K562 (cell line): ENCODE measurements at regions of chr9 and their contacts with region 1.

Region 1: GRCh38 chr9:91422758-91423711 is 597 bp downstream of the NFIL3 start:
- DNase-seq: peak in 3 of 4 experiments; percentile 18 to 74 (median 54)
- ATAC-seq: peak; percentile 38
- H3K4me3 ChIP-seq: peak overlapping the region; percentile 77
- H3K27ac ChIP-seq: peak overlapping the region; percentile 70; the same call in 2 of the 3 replicates
- H3K4me1 ChIP-seq: peaks cover 19 to 36% of the 10 kb centered on the region in 2 experiments
- H3K27me3 ChIP-seq: peaks cover 3 to 14% of the 10 kb centered on the region in 2 experiments; a peak in 3 of 5 replicates
- CTCF ChIP-seq: peak in 2 of 3 experiments; percentile 19 to 22; a peak in 1 of 6 replicates
- EP300 ChIP-seq: no peak
- POLR2A ChIP-seq: no peak
- RAD21 ChIP-seq: no peak

Region 2: DNA sequence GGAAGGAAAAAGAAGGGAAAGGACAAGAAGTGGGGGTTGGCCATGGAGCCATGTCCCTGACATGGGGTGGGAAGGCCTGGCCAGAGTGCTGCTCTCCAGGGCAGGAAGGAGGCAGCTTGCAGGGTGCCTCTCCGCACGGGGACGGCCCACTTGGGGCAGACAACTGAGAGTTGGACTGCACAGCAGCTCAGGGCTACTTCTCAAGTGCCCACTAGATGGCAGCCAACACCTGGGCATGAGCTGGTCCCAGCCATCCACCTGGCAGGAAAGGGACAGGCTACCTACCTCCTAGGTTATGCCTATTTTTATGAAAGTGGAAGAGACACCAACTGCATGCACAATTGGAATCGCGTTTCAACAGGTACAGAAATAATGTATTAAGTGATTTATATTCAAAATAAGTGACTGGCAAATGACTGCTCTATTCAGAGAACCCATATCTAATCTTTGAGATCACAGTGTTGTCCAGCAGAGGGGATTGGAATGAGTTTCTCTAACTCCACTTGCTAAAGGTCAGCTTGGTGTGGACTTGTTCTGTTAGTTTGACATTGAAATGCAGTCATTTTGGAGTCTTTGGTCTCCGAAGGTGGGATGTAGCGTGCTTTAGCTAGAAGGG is 508.1 kb before region 1 on chr9:
- CTCF ChIA-PET with region 1: interaction called, 3 read pairs
- POLR2A ChIA-PET with region 1: no interaction called
- in situ Hi-C with region 1: loop called (anchors 25 kb)
- intact Hi-C with region 1: loop called (anchors 5 kb)
- DNase-seq: peak; percentile 72 to 76 (median 75)
- ATAC-seq: peak; percentile 98
- H3K4me3 ChIP-seq: no peak overlapping the region
- H3K27ac ChIP-seq: no peak overlapping the region
- H3K4me1 ChIP-seq: no peaks in the 10 kb centered on the region
- H3K27me3 ChIP-seq: peaks cover 0 to 22% of the 10 kb centered on the region in 2 experiments; a peak in 2 of 5 replicates
- CTCF ChIP-seq: peak; percentile 78 to 84 (median 80)
- EP300 ChIP-seq: no peak
- POLR2A ChIP-seq: no peak
- RAD21 ChIP-seq: peak; percentile 78 to 88

Region 3: DNA sequence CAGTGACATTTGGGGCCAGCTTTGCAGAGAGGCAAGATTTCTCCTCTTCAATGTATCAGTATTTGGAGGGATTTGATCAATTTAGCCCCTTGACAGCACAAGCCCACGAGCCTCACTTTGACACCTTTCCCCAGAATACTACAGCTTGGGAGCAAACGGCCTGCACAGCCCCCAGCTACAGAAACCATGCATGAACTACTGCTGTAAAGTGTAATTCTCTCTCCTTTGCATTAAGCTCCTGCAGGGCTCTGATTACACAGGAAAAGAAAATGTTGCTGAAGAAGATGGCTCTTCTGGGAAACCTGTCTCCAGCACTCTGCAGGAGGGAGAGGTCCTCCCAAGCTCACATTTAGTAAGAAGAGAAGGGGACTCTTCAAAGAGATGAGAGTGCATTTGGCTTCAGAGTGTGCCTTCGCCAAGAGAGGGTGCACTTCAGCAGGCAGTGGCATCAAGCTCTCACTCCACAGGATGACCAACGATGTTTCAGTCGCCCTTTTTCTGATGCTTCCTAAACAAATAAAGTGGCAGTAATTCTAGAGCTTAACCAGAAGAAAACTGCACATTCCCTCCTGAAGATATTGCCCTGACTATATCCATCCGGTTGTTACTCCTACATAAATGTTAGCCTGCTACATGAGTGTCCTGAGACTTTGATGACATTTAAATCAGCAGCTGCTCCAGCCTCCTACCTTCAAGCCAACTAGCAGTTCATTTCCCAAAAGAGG is 333.5 kb before region 1 on chr9:
- CTCF ChIA-PET with region 1: no interaction called
- POLR2A ChIA-PET with region 1: no interaction called
- in situ Hi-C with region 1: no loop called
- intact Hi-C with region 1: loop called (anchors 1 kb)
- DNase-seq: peak in 2 of 4 experiments; percentile 13 to 35
- ATAC-seq: peak; percentile 69; the same call in 2 of the 3 replicates
- H3K4me3 ChIP-seq: no peak overlapping the region
- H3K27ac ChIP-seq: no peak overlapping the region
- H3K4me1 ChIP-seq: no peaks in the 10 kb centered on the region; a peak in 1 of 5 replicates
- H3K27me3 ChIP-seq: peaks cover 0 to 8% of the 10 kb centered on the region in 2 experiments; a peak in 1 of 5 replicates
- CTCF ChIP-seq: peak; percentile 38 to 70 (median 40); a peak in 4 of 6 replicates
- EP300 ChIP-seq: no peak
- POLR2A ChIP-seq: no peak
- RAD21 ChIP-seq: peak; percentile 72 to 75

Region 4: DNA sequence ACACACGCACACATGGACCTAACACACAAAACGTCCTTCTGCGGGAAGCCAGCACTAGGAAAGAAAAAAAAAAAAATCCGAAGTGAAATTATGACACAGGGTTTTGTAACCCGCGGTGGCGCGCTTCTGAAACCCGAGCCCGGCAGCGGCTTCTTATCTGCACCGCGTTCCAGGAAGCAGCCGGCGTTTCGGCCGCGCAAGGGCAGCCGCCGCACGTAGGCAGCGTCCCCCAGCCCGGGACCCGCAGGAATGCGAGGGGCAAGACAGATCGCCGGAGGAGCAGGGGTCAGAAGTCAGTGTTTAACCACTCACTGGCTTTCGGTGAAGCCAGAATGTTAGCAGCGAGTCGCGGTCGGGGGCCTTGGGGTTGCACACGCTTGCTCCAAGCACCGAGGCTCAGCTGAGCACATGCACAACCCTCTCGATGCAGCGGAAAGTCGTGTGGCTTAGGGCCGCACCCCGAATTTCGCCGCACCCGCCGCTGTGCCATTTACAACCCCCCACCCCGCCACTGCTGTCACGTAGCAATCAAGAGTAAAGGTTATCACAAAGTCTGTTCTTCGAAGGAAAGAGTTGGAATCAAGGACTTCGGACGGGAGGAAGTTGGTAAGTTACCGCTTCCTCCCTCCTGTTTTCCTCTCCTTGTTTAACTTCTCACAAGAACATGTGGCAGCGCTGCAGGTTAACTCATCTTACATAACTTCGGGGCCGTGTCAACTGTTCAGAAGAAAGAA is 229.2 kb before region 1 on chr9:
- CTCF ChIA-PET with region 1: no interaction called
- POLR2A ChIA-PET with region 1: no interaction called
- in situ Hi-C with region 1: no loop called
- intact Hi-C with region 1: loop called (anchors 5 kb)
- DNase-seq: peak; percentile 69 to 92 (median 75)
- ATAC-seq: peak; percentile 85
- H3K4me3 ChIP-seq: peak overlapping the region; percentile 31
- H3K27ac ChIP-seq: peak overlapping the region; percentile 99
- H3K4me1 ChIP-seq: peaks cover 26 to 60% of the 10 kb centered on the region in 2 experiments
- H3K27me3 ChIP-seq: no peaks in the 10 kb centered on the region
- CTCF ChIP-seq: peak in 1 of 3 experiments; percentile 21; a peak in 1 of 6 replicates
- EP300 ChIP-seq: peak; percentile 71
- POLR2A ChIP-seq: peak; percentile 81
- RAD21 ChIP-seq: peak in 1 of 2 experiments; percentile 28; a peak in 1 of 4 replicates

Region 5: GRCh38 chr9:91341239-91341746 is 81.7 kb before region 1 on chr9:
- CTCF ChIA-PET with region 1: no interaction called
- POLR2A ChIA-PET with region 1: no interaction called
- in situ Hi-C with region 1: no loop called
- intact Hi-C with region 1: loop called (anchors 5 kb)
- DNase-seq: peak in 3 of 4 experiments; percentile 19 to 37 (median 26)
- ATAC-seq: peak; percentile 75
- H3K4me3 ChIP-seq: no peak overlapping the region
- H3K27ac ChIP-seq: no peak overlapping the region
- H3K4me1 ChIP-seq: no peaks in the 10 kb centered on the region
- H3K27me3 ChIP-seq: no peaks in the 10 kb centered on the region
- CTCF ChIP-seq: peak; percentile 36 to 60 (median 49); a peak in 4 of 6 replicates
- EP300 ChIP-seq: no peak
- POLR2A ChIP-seq: no peak
- RAD21 ChIP-seq: peak in 1 of 2 experiments; percentile 58; a peak in 2 of 4 replicates

Region 6: DNA sequence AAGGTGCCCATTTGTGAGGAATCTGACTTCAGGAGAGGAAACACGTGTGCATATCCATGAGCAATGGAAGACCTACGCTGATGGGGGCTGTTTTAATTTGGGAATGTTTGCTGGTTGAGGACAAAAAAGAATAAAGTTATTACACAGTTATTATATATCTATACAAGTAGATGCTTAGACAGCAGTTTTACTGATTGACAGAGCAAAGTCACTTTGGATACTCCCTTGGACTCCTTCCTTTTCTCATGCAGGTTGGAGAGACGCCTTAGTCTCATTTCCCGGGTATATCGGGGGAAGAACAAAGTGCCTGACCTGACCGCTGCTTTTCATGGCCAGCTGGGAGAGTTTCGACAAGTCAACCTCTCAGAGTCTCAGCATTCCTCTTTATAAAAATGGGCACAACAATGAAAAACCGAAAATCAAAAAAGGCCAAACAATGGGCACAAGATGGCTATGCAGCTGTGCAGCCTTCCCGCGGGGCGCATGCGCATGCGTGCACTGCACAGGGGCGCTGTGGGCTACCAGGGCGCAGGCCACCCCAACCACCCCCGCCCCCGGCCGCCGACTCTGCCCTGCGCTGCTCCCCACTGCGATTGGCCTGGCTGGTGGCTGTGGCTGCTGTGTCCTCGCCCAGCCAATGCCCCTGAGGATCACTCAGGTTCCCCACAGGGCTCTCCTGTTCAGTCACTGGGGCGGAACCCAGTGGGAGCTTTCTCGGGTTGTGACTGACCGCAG is 17.5 kb before region 1 on chr9:
- CTCF ChIA-PET with region 1: no interaction called
- POLR2A ChIA-PET with region 1: interaction called, 11 read pairs
- in situ Hi-C with region 1: no loop called
- intact Hi-C with region 1: loop called (anchors 2 kb)
- DNase-seq: no peak
- ATAC-seq: peak; percentile 7; the same call in 1 of the 3 replicates
- H3K4me3 ChIP-seq: no peak overlapping the region
- H3K27ac ChIP-seq: no peak overlapping the region
- H3K4me1 ChIP-seq: peaks cover 7 to 11% of the 10 kb centered on the region in 2 experiments; a peak in 4 of 5 replicates
- H3K27me3 ChIP-seq: no peaks in the 10 kb centered on the region
- CTCF ChIP-seq: no peak
- EP300 ChIP-seq: no peak
- POLR2A ChIP-seq: no peak
- RAD21 ChIP-seq: no peak